CD8-positive, alpha-beta memory T cell (primary cell): ENCODE measurements at regions of chr1 and their contacts with region 1.

Region 1: DNA sequence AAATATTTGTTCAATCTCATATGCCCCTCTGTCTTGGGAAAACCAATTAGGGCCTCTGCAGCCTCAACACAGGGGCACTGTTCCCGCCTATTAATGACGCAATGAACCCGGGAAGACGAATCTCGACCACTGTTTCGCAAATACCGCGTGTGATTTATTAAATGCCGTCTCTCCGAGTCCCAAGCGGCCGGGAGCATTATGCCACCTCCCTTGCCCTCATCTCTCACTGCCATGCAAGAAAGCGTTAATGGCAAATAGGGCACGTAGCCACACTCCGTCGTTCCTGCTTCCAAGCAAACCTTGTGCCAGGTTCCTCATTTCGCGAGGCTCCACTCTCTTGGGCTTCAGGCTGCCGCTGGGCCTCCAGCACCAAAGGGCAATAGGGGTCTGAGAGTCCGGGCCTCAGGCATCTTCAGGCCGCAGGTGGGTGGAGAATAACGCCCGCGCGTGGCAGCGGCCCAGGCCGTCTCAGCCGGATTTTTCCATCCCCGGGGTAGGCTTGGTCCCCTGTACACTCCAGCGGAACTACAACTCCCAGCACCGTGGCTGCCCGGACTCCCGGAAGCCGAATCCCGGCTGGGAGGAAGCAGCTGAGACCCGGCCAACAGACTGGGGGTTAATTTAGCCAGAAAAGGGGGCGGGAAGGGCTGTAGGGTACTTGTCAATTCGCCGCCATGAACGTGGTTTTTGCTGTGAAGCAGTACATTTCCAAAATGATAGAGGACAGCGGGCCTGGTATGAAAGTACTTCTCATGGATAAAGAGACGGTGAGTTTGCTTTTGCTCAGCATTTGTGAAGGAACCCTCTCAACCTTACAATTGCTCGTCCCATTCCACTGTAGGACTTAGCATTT is at the start of gene VPS45:
- DNase-seq: peak; percentile 60 to 85 (median 71)
- H3K4me3 ChIP-seq: peak within 1 kb of the TSS; percentile 98
- H3K4me3 Mint-ChIP-seq: peak within 1 kb of the TSS; percentile 95 to 98 (median 96)
- H3K27ac ChIP-seq: peak within 1 kb of the TSS; percentile 89
- H3K27ac Mint-ChIP-seq: peak within 1 kb of the TSS; percentile 93 to 98 (median 94)
- H3K4me1 ChIP-seq: peaks cover 22% of the 10 kb centered on the region
- H3K4me1 Mint-ChIP-seq: peaks cover 33 to 43% (median 39%) of the 10 kb centered on the region in 3 donors
- H3K27me3 ChIP-seq: no peaks in the 10 kb centered on the region
- H3K27me3 Mint-ChIP-seq: no peaks in the 10 kb centered on the region
- total RNA-seq, gene VPS45: 26.3 to 33.6 TPM

Region 2: GRCh38 chr1:150162862-150163706 is 95.7 kb after region 1 on chr1:
- CTCF ChIA-PET with region 1: interaction called, 150 read pairs
- POLR2A ChIA-PET with region 1: interaction called, 4 read pairs
- DNase-seq: no peak
- H3K4me3 ChIP-seq: no peak overlapping the region
- H3K4me3 Mint-ChIP-seq: peak overlapping the region in 1 of 7 donors; percentile 58
- H3K27ac ChIP-seq: peak overlapping the region; percentile 85
- H3K27ac Mint-ChIP-seq: peak overlapping the region in 4 of 8 donors; percentile 4 to 78 (median 56)
- H3K4me1 ChIP-seq: peaks cover 42% of the 10 kb centered on the region
- H3K4me1 Mint-ChIP-seq: peaks cover 24 to 55% (median 38%) of the 10 kb centered on the region in 3 donors
- H3K27me3 ChIP-seq: no peaks in the 10 kb centered on the region
- H3K27me3 Mint-ChIP-seq: peaks cover 0 to 1% of the 10 kb centered on the region in 2 donors